ENCODE measurements at regions of chr11 and their contacts with region 1.

Region 1: DNA sequence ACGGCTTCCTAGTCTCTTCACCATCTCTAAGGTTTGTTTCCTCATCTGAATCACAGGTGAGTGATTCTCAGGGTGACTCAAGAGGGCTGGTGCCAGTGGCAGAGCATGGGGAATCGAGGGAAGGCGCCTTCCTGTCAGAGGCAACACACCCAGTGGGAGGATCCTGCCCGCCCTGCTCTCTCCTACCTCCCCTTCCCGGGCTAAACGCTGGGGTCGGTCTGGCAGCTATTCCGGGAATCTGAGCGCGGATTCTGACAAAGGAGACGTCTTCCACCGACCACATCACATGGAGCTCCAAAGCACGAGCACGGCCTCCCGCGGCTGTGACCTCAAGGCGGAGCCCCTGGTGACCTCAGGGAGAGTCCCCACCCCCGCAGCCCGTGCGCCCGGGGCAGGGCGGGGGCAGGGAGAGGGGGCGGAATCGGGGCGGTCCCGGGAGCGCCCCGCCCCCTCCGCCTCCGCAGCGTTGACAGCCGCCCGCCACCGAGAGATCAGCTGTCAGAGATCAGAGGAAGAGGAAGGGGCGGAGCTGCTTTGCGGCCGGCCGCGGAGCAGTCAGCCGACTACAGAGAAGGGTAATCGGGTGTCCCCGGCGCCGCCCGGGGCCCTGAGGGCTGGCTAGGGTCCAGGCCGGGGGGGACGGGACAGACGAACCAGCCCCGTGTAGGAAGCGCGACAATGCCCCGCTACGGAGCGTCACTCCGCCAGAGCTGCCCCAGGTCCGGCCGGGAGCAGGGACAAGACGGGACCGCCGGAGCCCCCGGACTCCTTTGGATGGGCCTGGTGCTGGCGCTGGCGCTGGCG is at the start of gene SMPD1:
- DNase-seq: peak; percentile 66
- ATAC-seq: peak; percentile 98
- H3K4me3 ChIP-seq: peak within 1 kb of the TSS; percentile 90
- H3K27ac ChIP-seq: peak within 1 kb of the TSS; percentile 64
- H3K4me1 ChIP-seq: peaks cover 6% of the 10 kb centered on the region
- H3K27me3 ChIP-seq: no peaks in the 10 kb centered on the region
- CTCF ChIP-seq: no peak
- EP300 ChIP-seq: peak; percentile 21 to 41; a peak in 1 of 4 replicates
- POLR2A ChIP-seq: peak; percentile 88
- RAD21 ChIP-seq: no peak
- polyA plus RNA-seq, gene SMPD1: 1.4 to 3.8 TPM

Region 2: DNA sequence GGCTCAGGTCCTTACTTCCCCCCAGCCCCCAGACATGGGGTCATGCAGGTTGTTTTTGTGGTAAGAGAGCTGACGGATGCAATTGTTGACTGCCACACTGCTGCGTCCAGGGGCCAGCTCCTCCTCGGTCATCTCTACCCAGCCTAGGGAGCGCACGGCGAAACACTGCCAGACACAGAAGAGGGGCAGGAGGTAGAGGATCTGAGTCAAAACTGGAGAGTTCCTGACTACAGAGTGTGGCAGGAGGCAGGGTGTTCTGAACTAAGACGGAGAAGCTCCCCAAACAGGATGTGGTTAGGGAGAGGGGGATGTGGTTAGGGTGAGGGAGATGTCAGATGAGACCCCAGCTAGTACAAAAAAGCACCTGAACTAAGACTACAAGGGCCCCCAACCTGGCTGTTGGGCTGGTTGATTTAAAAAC is 12.4 kb after region 1 on chr11:
- CTCF ChIA-PET with region 1: interaction called, 9 read pairs
- POLR2A ChIA-PET with region 1: interaction called, 21 read pairs
- RAD21 ChIA-PET with region 1: interaction called, 16 read pairs
- SMC1A ChIA-PET with region 1: interaction called, 10 read pairs
- in situ Hi-C with region 1: no loop called
- intact Hi-C with region 1: no loop called
- DNase-seq: peak; percentile 76
- ATAC-seq: peak; percentile 94
- H3K4me3 ChIP-seq: peak overlapping the region; percentile 54; the same call in 1 of the 2 replicates
- H3K27ac ChIP-seq: peak overlapping the region; percentile 16
- H3K4me1 ChIP-seq: peaks cover 25% of the 10 kb centered on the region
- H3K27me3 ChIP-seq: no peaks in the 10 kb centered on the region
- CTCF ChIP-seq: no peak
- EP300 ChIP-seq: peak; percentile 47 to 65; a peak in 2 of 4 replicates
- POLR2A ChIP-seq: peak; percentile 58
- RAD21 ChIP-seq: no peak

Region 3: GRCh38 chr11:6481012-6481923 is 91.1 kb after region 1 on chr11 and contains the starts of genes ARFIP2 and TIMM10B:
- CTCF ChIA-PET with region 1: no interaction called
- POLR2A ChIA-PET with region 1: interaction called, 13 read pairs
- RAD21 ChIA-PET with region 1: interaction called, 3 read pairs
- SMC1A ChIA-PET with region 1: no interaction called
- in situ Hi-C with region 1: no loop called
- intact Hi-C with region 1: no loop called
- DNase-seq: peak; percentile 91
- ATAC-seq: peak; percentile 98
- H3K4me3 ChIP-seq: peak within 1 kb of the TSS; percentile 98
- H3K27ac ChIP-seq: peak within 1 kb of the TSS; percentile 80
- H3K4me1 ChIP-seq: peaks cover 19% of the 10 kb centered on the region
- H3K27me3 ChIP-seq: no peaks in the 10 kb centered on the region
- CTCF ChIP-seq: no peak
- EP300 ChIP-seq: no peak
- POLR2A ChIP-seq: peak; percentile 98
- RAD21 ChIP-seq: no peak
- polyA plus RNA-seq, gene ARFIP2: 11.7 to 18.9 TPM
- polyA plus RNA-seq, gene TIMM10B: 93.3 to 126 TPM

Region 4: GRCh38 chr11:6505577-6506240 is 115.6 kb after region 1 on chr11:
- CTCF ChIA-PET with region 1: interaction called, 14 read pairs
- POLR2A ChIA-PET with region 1: no interaction called
- RAD21 ChIA-PET with region 1: interaction called, 3 read pairs
- SMC1A ChIA-PET with region 1: interaction called, 7 read pairs
- in situ Hi-C with region 1: no loop called
- intact Hi-C with region 1: no loop called
- DNase-seq: no peak
- ATAC-seq: peak; percentile 91
- H3K4me3 ChIP-seq: no peak overlapping the region
- H3K27ac ChIP-seq: no peak overlapping the region
- H3K4me1 ChIP-seq: no peaks in the 10 kb centered on the region
- H3K27me3 ChIP-seq: no peaks in the 10 kb centered on the region
- CTCF ChIP-seq: peak; percentile 66 to 71 (median 69); a peak in 5 of 6 replicates
- EP300 ChIP-seq: no peak
- POLR2A ChIP-seq: no peak
- RAD21 ChIP-seq: peak; percentile 58

Region 5: GRCh38 chr11:6603287-6604080 is 213.4 kb after region 1 on chr11 and contains the starts of genes ILK and RRP8:
- CTCF ChIA-PET with region 1: no interaction called
- POLR2A ChIA-PET with region 1: interaction called, 3 read pairs
- RAD21 ChIA-PET with region 1: no interaction called
- SMC1A ChIA-PET with region 1: no interaction called
- in situ Hi-C with region 1: no loop called
- intact Hi-C with region 1: loop called (anchors 10 kb)
- DNase-seq: peak; percentile 59
- ATAC-seq: peak; percentile 83
- H3K4me3 ChIP-seq: peak within 1 kb of the TSS; percentile 96
- H3K27ac ChIP-seq: peak within 1 kb of the TSS; percentile 85
- H3K4me1 ChIP-seq: peaks cover 25% of the 10 kb centered on the region
- H3K27me3 ChIP-seq: no peaks in the 10 kb centered on the region
- CTCF ChIP-seq: peak in 1 of 3 experiments; percentile 1; a peak in 1 of 6 replicates
- EP300 ChIP-seq: peak in 1 of 2 experiments; percentile 48; a peak in 1 of 4 replicates
- POLR2A ChIP-seq: peak; percentile 94
- RAD21 ChIP-seq: 0 out of 2 replicates have a peak, but pooled peaks have one; percentile 21
- polyA plus RNA-seq, gene ILK: 51.8 to 77.8 TPM
- polyA plus RNA-seq, gene RRP8: 4.7 to 15.8 TPM

Region 6: DNA sequence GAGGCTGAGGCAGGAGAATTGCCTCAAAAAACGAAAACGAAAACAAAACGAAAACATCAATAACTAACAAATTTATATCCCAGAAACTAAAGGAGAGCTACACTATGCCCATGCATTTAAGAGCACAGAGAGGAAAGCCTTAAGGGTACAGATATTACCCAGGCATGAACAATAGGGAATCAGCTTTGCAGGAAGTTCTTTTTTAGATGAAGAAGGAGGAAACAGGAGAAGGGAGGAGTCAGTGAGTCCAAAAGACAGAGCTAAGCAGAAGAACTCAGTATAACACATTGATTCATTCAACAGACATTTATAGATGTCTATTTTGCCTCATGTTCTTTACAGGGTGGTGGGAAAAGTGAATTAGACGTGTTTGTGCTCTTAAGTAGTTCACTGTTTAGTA is 284.7 kb after region 1 on chr11:
- CTCF ChIA-PET with region 1: no interaction called
- POLR2A ChIA-PET with region 1: no interaction called
- RAD21 ChIA-PET with region 1: no interaction called
- SMC1A ChIA-PET with region 1: no interaction called
- in situ Hi-C with region 1: loop called (anchors 10 kb)
- intact Hi-C with region 1: no loop called
- DNase-seq: no peak
- ATAC-seq: no peak
- H3K4me3 ChIP-seq: no peak overlapping the region
- H3K27ac ChIP-seq: no peak overlapping the region
- H3K4me1 ChIP-seq: peaks cover 10% of the 10 kb centered on the region
- H3K27me3 ChIP-seq: no peaks in the 10 kb centered on the region
- CTCF ChIP-seq: no peak
- EP300 ChIP-seq: no peak
- POLR2A ChIP-seq: no peak
- RAD21 ChIP-seq: no peak

Measured in GM12878 (cell line).